ENCODE measurements at regions of chr1 and their contacts with region 1.

Region 1: DNA sequence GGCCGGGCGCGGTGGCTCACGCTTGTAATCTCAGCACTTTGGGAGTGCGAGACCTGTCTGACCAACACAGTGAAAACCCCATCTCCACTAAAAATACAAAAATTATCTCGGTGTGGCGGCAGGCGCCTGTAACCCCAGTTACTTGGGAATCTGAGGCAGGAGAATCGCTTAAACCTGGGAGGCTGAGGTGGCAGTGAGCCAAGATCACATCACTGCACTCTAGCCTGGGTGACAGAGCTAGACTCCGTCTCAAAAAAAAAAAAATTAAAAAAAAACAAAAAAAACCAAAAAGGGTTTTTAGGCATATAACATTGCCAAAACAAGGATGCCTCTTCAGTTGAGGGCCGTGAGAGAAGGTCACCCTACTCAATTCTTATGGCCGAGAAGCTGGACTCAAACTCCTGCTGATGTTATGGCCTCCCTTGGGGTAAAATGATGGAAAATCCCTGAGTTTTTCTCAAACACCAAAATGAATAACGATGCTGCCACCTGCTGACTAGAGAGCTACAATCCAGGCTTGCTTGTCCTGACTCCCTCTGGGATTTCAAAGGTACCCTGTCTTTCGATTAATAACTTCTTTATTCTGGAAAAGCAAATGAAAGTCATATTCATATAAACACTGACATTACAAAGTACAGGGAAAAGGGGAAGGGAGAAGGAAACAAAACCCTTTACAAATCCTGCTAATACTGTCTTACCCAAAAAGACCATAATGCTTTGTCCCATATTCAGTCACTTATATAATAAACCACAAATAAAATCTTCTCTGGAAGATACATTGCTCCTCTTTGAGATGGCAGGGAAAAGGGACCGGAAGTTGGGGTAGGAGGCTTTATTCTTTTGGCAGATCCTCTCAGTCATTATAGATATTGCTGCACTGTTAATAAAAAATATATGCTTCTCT is 10.7 kb downstream of the RAB42 start:
- DNase-seq: peak in 2 of 4 donors; percentile 63 to 79
- ATAC-seq: peak; percentile 85
- H3K4me3 ChIP-seq: no peak overlapping the region
- H3K27ac ChIP-seq: no peak overlapping the region
- H3K4me1 ChIP-seq: no peaks in the 10 kb centered on the region
- H3K27me3 ChIP-seq: no peaks in the 10 kb centered on the region
- CTCF ChIP-seq: peak; percentile 53 to 65

Region 2: DNA sequence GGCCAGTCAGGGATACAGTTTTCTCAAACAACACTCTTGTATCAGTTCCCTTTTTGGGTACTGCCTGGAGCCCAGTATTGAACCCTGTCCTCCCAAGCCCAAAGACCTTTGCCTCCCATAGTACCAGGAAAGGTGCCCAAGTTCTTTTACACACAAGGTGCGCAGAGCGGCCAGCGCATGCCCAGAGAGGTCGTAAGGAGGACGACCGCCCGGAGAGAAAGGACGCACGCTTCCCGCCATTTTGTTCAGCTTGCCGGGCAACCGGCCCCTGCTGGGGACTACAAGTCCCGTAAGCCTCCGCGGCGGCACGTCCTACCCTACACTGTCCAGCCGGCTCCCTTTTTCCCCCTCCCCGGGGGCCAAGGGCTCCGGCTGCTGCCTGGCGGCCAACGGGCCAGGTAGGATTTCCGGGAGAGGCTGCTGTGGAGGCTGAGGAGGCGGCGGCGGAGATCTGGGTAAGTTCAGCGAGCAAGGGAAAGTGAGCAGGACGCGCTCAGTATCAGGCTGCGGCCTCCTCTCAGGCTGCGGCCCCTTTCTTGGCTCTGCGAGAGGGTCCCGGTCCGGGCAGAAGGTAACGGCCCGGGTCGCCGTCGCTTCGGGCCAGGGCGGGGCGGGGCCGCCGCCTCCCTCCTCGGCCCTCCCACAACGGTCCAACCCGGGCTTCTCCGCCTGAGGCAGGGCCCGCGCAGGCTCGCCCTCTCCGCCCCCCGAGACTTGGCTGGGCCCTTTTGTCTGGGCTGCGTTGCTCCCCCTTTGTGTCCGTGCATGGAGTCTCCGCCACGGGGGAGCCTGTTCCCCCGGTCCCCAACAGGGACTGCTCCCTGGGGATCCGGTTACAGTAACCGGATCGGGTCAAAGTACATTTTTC is 233.2 kb before region 1 on chr1 and contains the start of gene PHACTR4:
- intact Hi-C with region 1: loop called in 1 of 2 experiments (anchors 10 kb)
- DNase-seq: peak; percentile 86 to 97 (median 94)
- ATAC-seq: peak; percentile 97
- H3K4me3 ChIP-seq: peak within 1 kb of the TSS; percentile 72 to 87
- H3K27ac ChIP-seq: peak within 1 kb of the TSS; percentile 93 to 95
- H3K4me1 ChIP-seq: peaks cover 14 to 36% of the 10 kb centered on the region in 2 donors
- H3K27me3 ChIP-seq: no peaks in the 10 kb centered on the region
- CTCF ChIP-seq: no peak
- polyA plus RNA-seq, gene PHACTR4: 59.3 to 73.8 (median 68.7) TPM

Region 3: GRCh38 chr1:28409090-28409489 is 193.7 kb before region 1 on chr1:
- intact Hi-C with region 1: loop called in 1 of 2 experiments (anchors 10 kb)
- DNase-seq: no peak
- ATAC-seq: no peak
- H3K4me3 ChIP-seq: no peak overlapping the region
- H3K27ac ChIP-seq: no peak overlapping the region
- H3K4me1 ChIP-seq: no peaks in the 10 kb centered on the region
- H3K27me3 ChIP-seq: no peaks in the 10 kb centered on the region
- CTCF ChIP-seq: no peak

Region 4: DNA sequence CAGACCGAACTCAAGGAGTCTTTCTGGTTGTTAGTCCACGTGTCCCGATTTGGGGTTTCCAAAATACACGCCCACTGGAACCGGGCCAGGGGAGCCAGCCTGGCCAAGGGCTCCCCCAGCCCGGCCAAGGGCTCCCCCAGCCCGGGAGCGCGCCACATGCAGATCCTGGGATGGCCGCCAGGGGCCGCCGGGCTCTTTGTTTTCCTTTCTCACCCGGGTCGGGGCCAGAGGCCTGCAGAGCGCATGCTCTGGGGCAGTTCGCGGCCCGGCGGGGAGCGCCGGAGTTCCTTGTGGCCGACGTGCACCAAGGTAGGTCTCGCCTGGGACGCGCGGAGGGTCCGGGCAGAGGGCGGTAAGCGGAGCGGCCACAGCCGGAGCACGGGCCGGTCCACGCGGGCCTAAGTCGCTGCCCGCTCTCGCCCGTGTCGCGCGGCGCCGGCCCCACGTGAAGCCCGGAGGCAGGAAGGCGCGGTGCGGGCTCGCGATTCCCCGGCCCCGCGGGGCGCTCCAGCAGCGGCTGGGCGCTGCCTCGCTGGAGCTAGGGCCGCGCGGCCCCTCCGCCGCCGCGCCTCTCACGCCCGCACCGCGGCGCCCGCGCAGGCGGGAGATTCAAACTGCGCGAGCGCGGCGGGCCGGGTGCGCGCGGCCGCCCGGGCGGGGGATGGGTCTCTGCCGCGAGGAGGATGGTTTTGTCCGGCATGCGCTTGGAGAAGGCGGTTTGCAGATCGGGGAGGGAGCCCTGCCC is 84.6 kb before region 1 on chr1:
- intact Hi-C with region 1: loop called in 1 of 2 experiments (anchors 5 kb)
- DNase-seq: peak; percentile 90 to 99 (median 93)
- ATAC-seq: peak; percentile 95
- H3K4me3 ChIP-seq: peak overlapping the region; percentile 53 to 60
- H3K27ac ChIP-seq: peak overlapping the region; percentile 69 to 83
- H3K4me1 ChIP-seq: peaks cover 8 to 27% of the 10 kb centered on the region in 2 donors
- H3K27me3 ChIP-seq: no peaks in the 10 kb centered on the region
- CTCF ChIP-seq: peak; percentile 99 to 100